ENCODE measurements at regions of chr14 and their contacts with region 1.

Region 1: GRCh38 chr14:23076785-23077408 is 18.0 kb downstream of the ACIN1 start:
- DNase-seq: no peak
- H3K4me3 ChIP-seq: no peak overlapping the region
- H3K27me3 ChIP-seq: no peaks in the 10 kb centered on the region
- CTCF ChIP-seq: peak; percentile 70

Region 2: GRCh38 chr14:23095196-23096108 is 18.6 kb after region 1 on chr14 and contains the start of gene C14orf119:
- CTCF ChIA-PET with region 1: interaction called, 50 read pairs
- POLR2A ChIA-PET with region 1: interaction called, 10 read pairs
- DNase-seq: peak; percentile 99
- H3K4me3 ChIP-seq: peak within 1 kb of the TSS; percentile 89
- H3K27me3 ChIP-seq: no peaks in the 10 kb centered on the region
- CTCF ChIP-seq: no peak
- polyA plus RNA-seq, gene C14orf119: 104 and 112 TPM in 2 replicates

Region 3: GRCh38 chr14:23694085-23694975 is 617.4 kb after region 1 on chr14:
- CTCF ChIA-PET with region 1: no interaction called
- POLR2A ChIA-PET with region 1: no interaction called
- DNase-seq: peak; percentile 4
- H3K4me3 ChIP-seq: no peak overlapping the region
- H3K27me3 ChIP-seq: peaks cover 2% of the 10 kb centered on the region; the same call in 1 of the 2 replicates
- CTCF ChIP-seq: no peak

Measured in BJ (cell line).